Heart left ventricle (tissue), 16 donors: ENCODE measurements at regions of chr18 and their contacts with region 1.

Region 1: GRCh38 chr18:12038639-12039417 is 54.8 kb upstream of the ANKRD62 start:
- DNase-seq: peak; percentile 82 to 93 (median 89)
- ATAC-seq: peak; percentile 93 to 97 (median 96)
- H3K4me3 ChIP-seq: peak overlapping the region; percentile 24 to 67 (median 59)
- H3K27ac ChIP-seq: peak overlapping the region in 7 of 12 donors; percentile 19 to 69 (median 41)
- H3K4me1 ChIP-seq: peaks cover 0 to 15% (median 6%) of the 10 kb centered on the region in 12 donors
- H3K27me3 ChIP-seq: peaks cover 0 to 3% (median 0%) of the 10 kb centered on the region in 9 donors
- CTCF ChIP-seq: peak; percentile 98 to 99 (median 99)
- POLR2A ChIP-seq: peak in 1 of 2 donors; percentile 29

Region 2: GRCh38 chr18:11654736-11655605 is 383.9 kb before region 1 on chr18:
- intact Hi-C with region 1: loop called in 3 of 10 experiments (anchors 2 to 10 kb)
- DNase-seq: peak in 3 of 5 donors; percentile 20 to 50 (median 42)
- ATAC-seq: peak in 3 of 4 donors; percentile 70 to 77 (median 72)
- H3K4me3 ChIP-seq: peak overlapping the region in 1 of 12 donors; percentile 5
- H3K27ac ChIP-seq: no peak overlapping the region
- H3K4me1 ChIP-seq: peaks cover 0 to 5% (median 0%) of the 10 kb centered on the region in 12 donors
- H3K27me3 ChIP-seq: peaks cover 0 to 31% (median 0%) of the 10 kb centered on the region in 9 donors
- CTCF ChIP-seq: peak; percentile 55 to 81 (median 70)
- POLR2A ChIP-seq: no peak

Region 3: GRCh38 chr18:11937874-11938478 is 100.9 kb before region 1 on chr18:
- intact Hi-C with region 1: loop called (anchors 1 to 5 kb)
- DNase-seq: peak; percentile 57 to 80 (median 71)
- ATAC-seq: peak in 3 of 4 donors; percentile 66 to 81 (median 76)
- H3K4me3 ChIP-seq: no peak overlapping the region
- H3K27ac ChIP-seq: no peak overlapping the region
- H3K4me1 ChIP-seq: no peaks in the 10 kb centered on the region
- H3K27me3 ChIP-seq: no peaks in the 10 kb centered on the region
- CTCF ChIP-seq: peak; percentile 70 to 95 (median 82)
- POLR2A ChIP-seq: no peak

Region 4: DNA sequence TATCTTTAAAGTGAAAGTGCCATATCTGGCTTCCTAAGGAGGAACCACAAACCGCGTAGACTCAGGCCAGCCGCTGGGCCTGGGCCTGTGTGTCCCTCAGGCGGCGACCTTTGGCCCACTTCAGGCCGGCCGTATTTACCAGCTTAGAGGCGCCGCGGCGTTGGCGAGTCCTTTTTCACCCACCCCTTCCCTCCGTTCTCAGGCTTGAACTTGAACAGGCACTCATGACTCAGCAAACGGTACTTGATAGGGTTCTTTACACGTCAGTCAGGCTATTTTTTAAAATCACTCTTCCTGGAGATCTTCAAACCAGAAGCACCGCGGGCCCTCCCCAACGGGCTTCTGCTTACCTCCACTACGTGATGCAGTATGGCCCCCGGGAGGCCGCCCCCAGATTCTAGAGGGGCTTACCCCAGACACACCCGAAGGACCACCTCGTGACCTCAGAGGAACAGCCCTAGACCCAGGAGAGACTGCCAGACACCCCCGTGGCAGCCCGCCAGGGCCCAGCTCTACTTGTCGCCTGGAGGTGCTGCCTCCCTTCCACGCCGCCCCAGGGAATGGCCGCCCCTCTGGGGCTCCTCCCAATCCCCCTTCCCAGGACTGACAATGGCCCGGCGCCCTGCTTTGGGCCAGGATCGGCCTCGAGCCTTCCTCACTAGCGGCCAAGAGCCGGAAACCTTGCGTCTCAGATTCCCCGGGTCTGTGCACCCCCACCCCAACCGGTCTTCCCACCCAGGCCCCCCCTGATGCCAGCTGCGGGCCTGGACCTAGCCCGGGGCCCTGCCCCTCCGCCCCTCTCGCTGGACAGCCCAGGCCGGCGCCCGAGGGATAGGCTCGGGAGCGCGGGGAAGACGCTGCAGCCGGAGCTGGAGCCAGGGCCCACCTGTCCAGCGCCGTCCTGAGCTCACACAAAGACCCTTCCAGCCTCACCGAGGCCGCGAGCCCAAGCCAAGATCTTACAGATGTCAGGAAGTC is 91.3 kb before region 1 on chr18:
- intact Hi-C with region 1: loop called in 1 of 10 experiments (anchors 5 kb)
- DNase-seq: peak; percentile 93 to 97 (median 95)
- ATAC-seq: peak; percentile 98 to 99 (median 98)
- H3K4me3 ChIP-seq: peak overlapping the region; percentile 4 to 86 (median 65)
- H3K27ac ChIP-seq: peak overlapping the region; percentile 88 to 100 (median 96)
- H3K4me1 ChIP-seq: peaks cover 0 to 22% (median 13%) of the 10 kb centered on the region in 12 donors
- H3K27me3 ChIP-seq: no peaks in the 10 kb centered on the region
- CTCF ChIP-seq: peak in 2 of 12 donors; percentile 5 to 15
- POLR2A ChIP-seq: peak in 1 of 2 donors; percentile 86

Region 5: DNA sequence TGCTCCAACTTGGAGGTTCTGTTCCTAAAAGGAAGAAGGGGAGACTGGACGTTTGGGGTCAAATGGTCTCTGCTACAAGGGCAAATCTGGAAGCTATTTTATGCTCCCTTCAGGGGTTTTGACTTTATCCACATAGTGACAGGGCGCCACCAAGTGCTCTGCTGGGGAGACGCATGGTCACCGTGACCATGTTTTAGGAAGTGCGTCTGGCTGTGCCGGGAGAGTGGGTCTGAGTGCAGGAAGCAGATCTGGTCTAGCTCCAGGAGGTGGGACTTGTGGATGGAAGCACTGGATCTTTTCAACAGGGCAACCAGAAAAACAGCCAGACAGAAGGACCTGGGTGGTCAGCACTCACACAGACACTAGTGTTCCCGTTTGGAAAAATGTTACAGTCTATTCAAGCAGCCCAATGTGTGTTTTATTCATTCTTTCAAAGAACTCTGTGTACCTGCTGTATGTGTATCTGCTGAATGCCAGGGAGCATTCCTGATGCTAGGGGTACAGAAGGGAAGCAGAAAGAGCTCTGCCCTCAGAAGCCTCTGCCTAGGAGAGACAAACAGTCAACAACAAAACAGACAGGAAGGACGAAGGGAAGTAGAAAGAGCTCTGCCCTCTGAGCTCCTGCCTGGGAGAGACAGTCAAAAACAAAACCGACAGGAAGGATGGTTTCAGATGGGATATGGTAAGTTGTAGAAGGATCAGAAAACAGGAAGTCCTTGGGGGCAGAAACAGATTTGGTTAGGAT is 43.2 kb before region 1 on chr18:
- intact Hi-C with region 1: loop called in 5 of 10 experiments (anchors 5 kb)
- DNase-seq: peak; percentile 79 to 87 (median 84)
- ATAC-seq: peak; percentile 80 to 92 (median 86)
- H3K4me3 ChIP-seq: no peak overlapping the region
- H3K27ac ChIP-seq: peak overlapping the region in 10 of 12 donors; percentile 28 to 72 (median 58)
- H3K4me1 ChIP-seq: peaks cover 0 to 42% (median 24%) of the 10 kb centered on the region in 12 donors
- H3K27me3 ChIP-seq: no peaks in the 10 kb centered on the region
- CTCF ChIP-seq: peak; percentile 59 to 91 (median 80)
- POLR2A ChIP-seq: peak in 1 of 2 donors; percentile 21